A673 (cell line): ENCODE measurements at regions of chr10 and their contacts with region 1.

Region 1: GRCh38 chr10:102476466-102477141 is 25.3 kb upstream of the C10orf95 start:
- DNase-seq: no peak
- H3K4me3 ChIP-seq: no peak overlapping the region
- H3K27ac ChIP-seq: no peak overlapping the region
- H3K4me1 ChIP-seq: no peaks in the 10 kb centered on the region
- H3K27me3 ChIP-seq: no peaks in the 10 kb centered on the region
- CTCF ChIP-seq: no peak

Region 2: DNA sequence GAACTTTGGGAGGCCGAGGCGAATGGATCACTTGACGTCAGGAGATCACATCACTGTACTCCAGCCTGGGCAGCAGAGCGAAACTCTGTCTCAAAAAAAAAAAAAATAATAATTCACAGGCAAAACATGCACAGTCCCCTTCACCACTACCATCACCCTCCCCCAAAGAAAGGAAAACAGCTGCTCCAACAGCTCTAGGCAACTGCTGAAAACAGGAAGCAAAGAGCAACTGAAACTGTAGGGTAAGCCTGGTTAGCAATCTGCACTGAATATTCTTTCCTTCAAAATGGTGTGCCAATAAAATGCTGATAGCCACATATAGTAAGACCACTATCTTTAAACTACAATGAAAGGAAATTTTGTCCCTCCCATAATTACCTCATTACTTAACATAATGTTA is 704.6 kb after region 1 on chr10:
- CTCF ChIA-PET with region 1: no interaction called
- POLR2A ChIA-PET with region 1: interaction called, 11 read pairs
- intact Hi-C with region 1: no loop called
- DNase-seq: no peak
- H3K4me3 ChIP-seq: no peak overlapping the region
- H3K27ac ChIP-seq: no peak overlapping the region
- H3K4me1 ChIP-seq: no peaks in the 10 kb centered on the region
- H3K27me3 ChIP-seq: no peaks in the 10 kb centered on the region
- CTCF ChIP-seq: no peak